ENCODE measurements at regions of chr7 and their contacts with region 1.

Region 1: GRCh38 chr7:106947244-106947728 is 82.2 kb downstream of the PIK3CG start:
- DNase-seq: peak; percentile 88 to 96 (median 90)
- ATAC-seq: peak; percentile 95
- H3K4me3 ChIP-seq: no peak overlapping the region
- H3K27ac ChIP-seq: no peak overlapping the region
- H3K4me1 ChIP-seq: peaks cover 7 to 21% of the 10 kb centered on the region in 2 experiments
- H3K27me3 ChIP-seq: no peaks in the 10 kb centered on the region; a peak in 1 of 5 replicates
- CTCF ChIP-seq: peak; percentile 92 to 99 (median 94)
- EP300 ChIP-seq: peak; percentile 57; the same call in 1 of the 2 replicates
- POLR2A ChIP-seq: no peak
- RAD21 ChIP-seq: peak; percentile 100

Region 2: GRCh38 chr7:106793015-106793975 is 154.0 kb before region 1 on chr7:
- CTCF ChIA-PET with region 1: interaction called, 10 read pairs
- POLR2A ChIA-PET with region 1: no interaction called
- in situ Hi-C with region 1: loop called (anchors 10 kb)
- intact Hi-C with region 1: loop called (anchors 1 kb)
- DNase-seq: peak; percentile 59 to 78 (median 63)
- ATAC-seq: peak; percentile 53
- H3K4me3 ChIP-seq: no peak overlapping the region
- H3K27ac ChIP-seq: no peak overlapping the region
- H3K4me1 ChIP-seq: peaks cover 0 to 5% of the 10 kb centered on the region in 2 experiments; a peak in 1 of 5 replicates
- H3K27me3 ChIP-seq: no peaks in the 10 kb centered on the region
- CTCF ChIP-seq: peak; percentile 59 to 93 (median 74); a peak in 5 of 6 replicates
- EP300 ChIP-seq: no peak
- POLR2A ChIP-seq: no peak
- RAD21 ChIP-seq: peak; percentile 91 to 94

Region 3: GRCh38 chr7:106914018-106914607 is 33.2 kb before region 1 on chr7:
- CTCF ChIA-PET with region 1: no interaction called
- POLR2A ChIA-PET with region 1: no interaction called
- in situ Hi-C with region 1: no loop called
- intact Hi-C with region 1: no loop called
- DNase-seq: no peak
- ATAC-seq: no peak
- H3K4me3 ChIP-seq: no peak overlapping the region
- H3K27ac ChIP-seq: no peak overlapping the region
- H3K4me1 ChIP-seq: no peaks in the 10 kb centered on the region
- H3K27me3 ChIP-seq: no peaks in the 10 kb centered on the region; a peak in 2 of 5 replicates
- CTCF ChIP-seq: no peak
- EP300 ChIP-seq: no peak
- POLR2A ChIP-seq: no peak
- RAD21 ChIP-seq: no peak

Region 4: DNA sequence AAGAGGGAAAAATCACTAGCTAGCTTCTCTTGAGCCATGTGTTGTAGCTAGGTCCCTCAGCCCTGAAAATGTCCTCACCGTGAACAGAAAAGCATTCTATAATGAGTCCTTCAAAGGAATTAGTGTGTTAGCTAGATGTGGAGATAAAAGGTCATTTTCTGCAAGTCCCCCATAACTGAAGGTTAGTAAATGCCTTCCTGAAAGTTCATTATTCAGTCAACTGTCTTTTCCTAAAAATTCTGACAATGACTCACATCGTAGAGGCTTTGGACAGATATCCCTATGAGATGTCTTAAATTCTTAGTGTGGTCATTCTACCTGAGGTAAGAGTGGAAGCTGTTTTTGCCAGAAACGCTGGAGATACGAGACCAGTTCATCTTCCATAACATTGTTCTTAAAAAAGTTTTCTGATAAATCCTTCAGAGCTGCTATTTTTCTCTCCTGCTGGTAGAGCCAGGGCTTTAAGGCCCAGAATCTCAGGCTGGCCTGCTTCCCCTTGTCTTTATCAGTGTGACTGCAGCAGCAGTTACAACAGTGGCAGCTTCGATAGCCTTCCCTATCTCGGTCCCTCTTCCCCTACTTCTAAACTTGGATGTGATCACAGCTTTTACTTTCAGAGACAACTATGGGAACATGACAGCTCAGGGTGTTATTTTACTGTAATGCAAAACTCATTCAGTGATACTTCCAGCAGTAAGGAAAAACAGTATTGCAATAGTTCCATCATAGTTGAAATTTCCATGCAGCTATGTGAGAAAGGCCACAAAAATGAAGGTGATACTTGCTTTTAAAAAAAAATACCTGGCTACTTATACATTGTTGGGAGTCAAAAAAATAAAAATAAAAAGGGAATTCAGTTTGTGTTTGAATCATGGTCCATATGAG is 60.0 kb after region 1 on chr7:
- CTCF ChIA-PET with region 1: no interaction called
- POLR2A ChIA-PET with region 1: interaction called, 4 read pairs
- in situ Hi-C with region 1: no loop called
- intact Hi-C with region 1: loop called (anchors 1 kb)
- DNase-seq: peak; percentile 87 to 99 (median 91)
- ATAC-seq: peak; percentile 85
- H3K4me3 ChIP-seq: peak overlapping the region; percentile 39
- H3K27ac ChIP-seq: peak overlapping the region; percentile 96
- H3K4me1 ChIP-seq: peaks cover 37 to 44% of the 10 kb centered on the region in 2 experiments
- H3K27me3 ChIP-seq: no peaks in the 10 kb centered on the region
- CTCF ChIP-seq: peak in 2 of 3 experiments; percentile 12 to 30; a peak in 2 of 6 replicates
- EP300 ChIP-seq: peak; percentile 99
- POLR2A ChIP-seq: peak; percentile 68
- RAD21 ChIP-seq: peak; percentile 50 to 57

Region 5: DNA sequence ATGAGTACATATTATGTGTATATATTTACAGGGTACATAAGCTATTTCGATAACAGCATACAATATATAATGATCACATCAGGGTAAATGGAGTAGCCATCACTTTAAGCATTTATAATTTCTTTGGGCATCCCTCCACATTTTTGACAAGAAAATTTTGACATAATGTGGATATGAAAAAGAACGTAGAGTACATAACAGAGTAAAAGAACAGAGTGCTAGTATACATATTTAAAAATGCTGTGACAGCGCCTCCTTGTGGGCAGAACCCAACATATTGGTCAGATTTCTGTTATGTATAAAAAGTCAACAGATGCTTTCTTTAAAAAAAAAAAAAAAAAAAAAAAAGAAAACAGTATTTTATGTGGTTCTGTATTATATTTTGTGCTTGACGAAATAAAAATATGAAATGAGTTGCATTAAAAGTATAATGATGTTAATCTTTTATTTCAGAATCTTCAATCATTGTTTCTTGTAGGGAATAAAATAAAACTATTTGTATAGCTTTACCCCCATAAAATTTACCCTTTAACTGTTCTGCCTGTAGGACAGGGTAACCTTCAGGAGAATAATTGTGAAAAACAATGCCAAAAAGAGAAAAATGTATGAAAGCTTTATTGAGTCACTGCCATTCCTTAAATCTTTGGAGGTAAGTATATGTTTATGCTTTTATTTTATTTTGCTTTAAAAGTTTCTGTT is 203.2 kb after region 1 on chr7:
- CTCF ChIA-PET with region 1: interaction called, 188 read pairs
- POLR2A ChIA-PET with region 1: interaction called, 10 read pairs
- in situ Hi-C with region 1: loop called (anchors 5 kb)
- intact Hi-C with region 1: loop called (anchors 1 kb)
- DNase-seq: peak; percentile 62 to 91 (median 63)
- ATAC-seq: peak; percentile 87
- H3K4me3 ChIP-seq: no peak overlapping the region
- H3K27ac ChIP-seq: peak overlapping the region; percentile 9; the same call in 1 of the 3 replicates
- H3K4me1 ChIP-seq: no peaks in the 10 kb centered on the region
- H3K27me3 ChIP-seq: no peaks in the 10 kb centered on the region
- CTCF ChIP-seq: peak; percentile 64 to 95 (median 67); a peak in 4 of 6 replicates
- EP300 ChIP-seq: no peak
- POLR2A ChIP-seq: no peak
- RAD21 ChIP-seq: peak; percentile 95 to 96

Region 6: DNA sequence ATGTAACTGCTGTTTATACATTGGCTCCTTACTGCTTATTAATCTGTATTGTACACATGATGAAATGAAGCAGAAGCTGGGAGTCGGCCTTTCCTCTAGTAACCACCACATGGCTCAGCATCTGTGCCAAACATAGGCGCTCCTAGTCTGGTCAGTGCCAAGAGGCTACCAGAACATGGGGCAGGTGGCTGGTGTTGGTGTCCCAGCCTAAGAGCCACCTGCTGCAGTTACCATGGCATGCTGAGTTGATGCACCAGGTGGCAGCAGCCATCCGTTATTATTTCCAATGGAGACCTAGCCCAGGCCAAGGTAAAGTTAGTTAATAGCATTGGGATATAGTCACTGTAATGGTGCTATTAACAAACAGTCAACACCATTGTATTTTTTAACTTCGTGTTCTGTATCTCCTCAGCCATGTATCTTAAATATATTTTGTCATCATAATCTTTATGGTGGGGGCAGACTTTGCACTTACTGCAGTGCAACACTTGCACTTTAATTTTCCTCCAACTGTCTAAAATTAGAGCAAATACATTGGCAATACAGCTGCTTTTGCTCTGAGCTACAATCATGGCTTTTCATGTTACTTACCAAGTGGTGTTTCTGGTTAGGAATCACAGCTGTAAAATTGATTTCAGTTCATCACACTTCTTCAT is 254.6 kb after region 1 on chr7:
- CTCF ChIA-PET with region 1: no interaction called
- POLR2A ChIA-PET with region 1: no interaction called
- in situ Hi-C with region 1: no loop called
- intact Hi-C with region 1: loop called (anchors 5 kb)
- DNase-seq: peak; percentile 59 to 68 (median 64)
- ATAC-seq: peak; percentile 90
- H3K4me3 ChIP-seq: no peak overlapping the region
- H3K27ac ChIP-seq: no peak overlapping the region
- H3K4me1 ChIP-seq: peaks cover 0 to 5% of the 10 kb centered on the region in 2 experiments; a peak in 1 of 5 replicates
- H3K27me3 ChIP-seq: no peaks in the 10 kb centered on the region
- CTCF ChIP-seq: peak; percentile 77 to 84 (median 80)
- EP300 ChIP-seq: no peak
- POLR2A ChIP-seq: no peak
- RAD21 ChIP-seq: peak; percentile 73 to 80

Region 7: GRCh38 chr7:107725151-107725740 is 778.0 kb after region 1 on chr7:
- CTCF ChIA-PET with region 1: no interaction called
- POLR2A ChIA-PET with region 1: no interaction called
- in situ Hi-C with region 1: no loop called
- intact Hi-C with region 1: loop called (anchors 5 kb)
- DNase-seq: peak; percentile 63 to 83 (median 70)
- ATAC-seq: peak; percentile 75
- H3K4me3 ChIP-seq: no peak overlapping the region
- H3K27ac ChIP-seq: no peak overlapping the region
- H3K4me1 ChIP-seq: peaks cover 0 to 6% of the 10 kb centered on the region in 2 experiments; a peak in 1 of 5 replicates
- H3K27me3 ChIP-seq: no peaks in the 10 kb centered on the region
- CTCF ChIP-seq: peak; percentile 56 to 91 (median 79); a peak in 5 of 6 replicates
- EP300 ChIP-seq: no peak
- POLR2A ChIP-seq: no peak
- RAD21 ChIP-seq: peak; percentile 94 to 95

Measured in K562 (cell line).